Tibial artery (tissue), 4 donors: ENCODE measurements at regions of chr1 and their contacts with region 1.

Region 1: DNA sequence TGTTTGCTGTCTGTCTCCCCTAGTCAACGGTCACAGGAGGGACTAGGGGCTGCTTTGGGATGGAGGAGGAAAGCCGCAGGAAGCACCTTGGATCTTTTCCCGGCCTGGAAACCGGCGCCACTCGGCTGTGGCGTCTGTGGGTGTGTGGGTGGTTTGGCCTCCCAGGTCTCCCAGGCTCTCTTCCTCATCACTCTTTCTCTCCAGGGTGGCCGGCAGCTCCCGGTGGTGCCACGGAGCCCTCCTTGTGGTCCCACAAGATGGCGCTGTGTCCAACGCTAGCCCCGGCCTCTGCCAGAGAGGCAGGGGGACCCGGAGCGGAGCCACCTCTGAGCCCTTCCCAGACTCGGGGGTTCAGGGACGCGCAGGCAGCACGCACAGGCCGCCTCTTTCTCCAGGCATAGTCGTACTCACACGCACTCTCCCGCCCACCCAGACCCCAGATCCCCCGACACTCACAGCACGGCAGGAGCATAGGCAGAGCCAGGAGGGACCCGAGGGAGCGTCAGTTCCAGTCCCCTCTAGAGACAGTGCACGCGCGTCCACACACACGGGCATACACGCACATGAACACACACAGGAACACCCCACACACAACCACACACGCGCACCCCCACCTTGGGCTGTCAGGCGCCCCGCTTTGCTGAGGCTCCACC is 31.2 kb downstream of the CDCP2 start:
- DNase-seq: peak; percentile 66 to 85
- H3K4me3 ChIP-seq: peak overlapping the region; percentile 10 to 38
- H3K27ac ChIP-seq: peak overlapping the region in 1 of 2 donors; percentile 5
- H3K4me1 ChIP-seq: peaks cover 0 to 13% (median 6%) of the 10 kb centered on the region in 4 donors
- H3K27me3 ChIP-seq: peaks cover 0 to 6% of the 10 kb centered on the region in 2 donors
- CTCF ChIP-seq: peak; percentile 76 to 79

Region 2: GRCh38 chr1:54227091-54227602 is 105.5 kb after region 1 on chr1:
- intact Hi-C with region 1: loop called (anchors 10 kb)
- DNase-seq: peak; percentile 63 to 88
- H3K4me3 ChIP-seq: no peak overlapping the region
- H3K27ac ChIP-seq: peak overlapping the region; percentile 56 to 74
- H3K4me1 ChIP-seq: peaks cover 0 to 30% (median 22%) of the 10 kb centered on the region in 4 donors
- H3K27me3 ChIP-seq: no peaks in the 10 kb centered on the region
- CTCF ChIP-seq: no peak

Region 3: GRCh38 chr1:54297596-54298283 is 176.1 kb after region 1 on chr1:
- intact Hi-C with region 1: no loop called
- DNase-seq: no peak
- H3K4me3 ChIP-seq: no peak overlapping the region
- H3K27ac ChIP-seq: peak overlapping the region; percentile 87 to 98
- H3K4me1 ChIP-seq: peaks cover 7 to 76% (median 72%) of the 10 kb centered on the region in 4 donors
- H3K27me3 ChIP-seq: no peaks in the 10 kb centered on the region
- CTCF ChIP-seq: no peak